ENCODE measurements at regions of chr15 and their contacts with region 1.

Region 1: DNA sequence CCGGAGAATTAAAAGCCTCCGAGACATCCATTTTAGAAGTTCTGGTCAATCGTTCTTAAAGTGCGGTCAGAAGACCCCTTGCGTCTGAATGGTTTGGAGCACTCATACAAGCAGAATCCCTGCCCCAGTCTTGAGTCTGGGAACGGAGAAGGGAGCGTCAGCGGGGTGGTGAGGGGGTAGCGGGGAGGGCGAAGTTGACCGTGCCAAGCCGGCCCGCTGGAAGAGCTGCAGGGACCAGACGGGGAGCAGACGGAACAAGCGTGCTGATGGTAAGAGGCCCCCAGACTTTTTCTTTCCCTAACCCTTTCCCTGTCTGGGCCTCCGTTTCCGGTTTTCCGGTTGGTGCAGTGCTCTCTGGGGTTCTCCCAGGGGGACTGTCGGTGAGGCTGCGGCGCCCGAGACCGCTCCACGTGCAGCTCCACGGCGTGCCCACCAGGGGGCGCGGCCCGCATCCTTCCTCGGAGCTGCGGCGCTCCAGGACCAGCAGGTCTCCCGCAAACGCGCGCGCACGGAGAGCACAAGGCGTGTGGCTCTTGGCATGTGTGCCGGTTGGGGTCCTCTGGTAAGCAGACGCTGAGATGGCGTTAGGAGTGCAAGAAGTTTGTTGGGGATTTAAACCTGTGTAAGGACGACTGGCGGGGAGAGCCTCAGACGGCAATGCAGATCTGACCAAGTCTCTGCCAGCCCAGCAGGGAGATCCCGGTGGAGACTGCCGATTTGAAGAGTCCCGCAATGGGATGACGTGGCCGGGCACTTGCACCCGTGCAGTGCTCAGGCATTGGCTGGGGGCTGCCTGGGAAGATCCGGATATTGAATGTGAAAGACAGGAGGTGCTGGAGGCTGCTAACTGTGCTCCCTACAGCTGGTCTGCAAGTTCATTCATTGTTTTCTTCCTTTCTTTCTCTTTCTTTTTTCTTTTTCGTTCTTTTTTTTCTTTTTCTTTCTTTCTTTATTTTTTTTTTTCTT is 19.2 kb upstream of the CORO2B start:
- DNase-seq: peak; percentile 96
- H3K4me3 ChIP-seq: peak overlapping the region in 7 of 8 donors; percentile 23 to 61 (median 33)
- H3K27ac ChIP-seq: peak overlapping the region in 1 of 8 donors; percentile 16
- H3K4me1 ChIP-seq: peaks cover 14 to 22% (median 18%) of the 10 kb centered on the region in 6 donors
- H3K27me3 ChIP-seq: peaks cover 0 to 55% (median 9%) of the 10 kb centered on the region in 7 donors
- CTCF ChIP-seq: peak; percentile 91 to 98 (median 96)
- POLR2A ChIP-seq: no peak

Region 2: DNA sequence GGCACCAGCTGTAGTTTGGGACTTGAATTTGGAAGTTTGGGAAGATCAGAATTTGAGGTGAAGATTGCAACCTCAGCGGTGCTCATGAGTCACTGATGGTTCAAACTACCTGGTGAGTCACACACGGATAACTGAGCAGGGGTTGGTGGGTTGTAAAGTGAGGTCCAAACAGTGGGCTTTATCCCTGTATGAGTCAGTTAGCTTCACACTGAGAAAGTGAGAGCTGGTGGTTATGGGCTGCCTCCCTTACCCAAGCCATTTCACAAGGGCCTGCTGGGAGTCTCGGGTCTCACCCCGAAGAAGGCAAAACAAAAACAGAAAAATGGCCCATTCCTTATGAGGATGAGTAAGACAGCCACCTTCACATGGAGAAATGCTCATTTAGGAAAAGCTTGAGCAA is 204.7 kb before region 1 on chr15:
- intact Hi-C with region 1: no loop called
- DNase-seq: no peak
- H3K4me3 ChIP-seq: no peak overlapping the region
- H3K27ac ChIP-seq: no peak overlapping the region
- H3K4me1 ChIP-seq: peaks cover 0 to 15% (median 8%) of the 10 kb centered on the region in 6 donors
- H3K27me3 ChIP-seq: no peaks in the 10 kb centered on the region
- CTCF ChIP-seq: no peak
- POLR2A ChIP-seq: no peak

Region 3: DNA sequence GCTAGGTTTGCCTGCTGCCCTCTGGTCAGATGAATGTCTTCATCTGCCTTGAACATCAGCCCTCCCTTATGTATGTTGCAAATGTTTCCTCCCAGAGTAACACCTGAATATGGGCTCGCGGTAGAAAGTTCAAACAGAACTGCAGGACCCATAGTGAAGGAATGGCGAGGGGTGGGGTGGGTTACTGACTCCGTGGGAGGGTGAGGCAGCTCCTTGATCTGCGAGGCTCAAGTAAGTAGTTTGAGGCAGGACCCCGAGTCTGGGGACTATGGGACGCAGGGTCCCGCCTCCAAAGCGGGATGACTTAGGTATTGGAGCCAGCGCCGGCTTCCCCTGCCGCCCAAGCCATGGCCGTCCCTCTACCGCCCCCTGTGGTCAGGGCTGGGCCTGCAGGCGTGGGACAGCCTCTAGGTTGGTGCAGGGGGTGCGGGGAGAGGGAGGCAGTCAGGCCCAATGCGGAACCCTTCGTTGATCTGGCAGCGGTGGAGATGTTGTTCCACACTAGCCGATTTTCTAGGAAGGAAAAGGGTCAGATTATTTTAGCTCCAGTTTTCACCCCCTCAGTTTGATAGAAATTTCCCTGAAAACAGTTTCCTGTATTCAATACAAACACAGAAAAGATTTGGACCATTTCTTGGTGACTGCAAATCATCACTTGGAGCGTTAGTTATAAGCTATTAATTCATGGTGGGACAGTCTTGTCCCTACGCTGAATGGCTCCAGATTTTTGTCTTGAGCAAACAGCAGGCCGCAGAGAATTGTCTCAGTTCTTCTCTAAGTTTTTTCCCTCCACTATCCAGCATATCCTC is 91.5 kb after region 1 on chr15:
- intact Hi-C with region 1: loop called (anchors 10 kb)
- DNase-seq: peak; percentile 88
- H3K4me3 ChIP-seq: no peak overlapping the region
- H3K27ac ChIP-seq: no peak overlapping the region
- H3K4me1 ChIP-seq: no peaks in the 10 kb centered on the region
- H3K27me3 ChIP-seq: peaks cover 0 to 7% (median 0%) of the 10 kb centered on the region in 7 donors
- CTCF ChIP-seq: peak in 10 of 11 experiments; percentile 36 to 79 (median 66)
- POLR2A ChIP-seq: no peak

Region 4: GRCh38 chr15:68672781-68673205 is 113.2 kb after region 1 on chr15:
- intact Hi-C with region 1: loop called (anchors 5 kb)
- DNase-seq: peak; percentile 42
- H3K4me3 ChIP-seq: no peak overlapping the region
- H3K27ac ChIP-seq: no peak overlapping the region
- H3K4me1 ChIP-seq: peaks cover 13 to 30% (median 22%) of the 10 kb centered on the region in 6 donors
- H3K27me3 ChIP-seq: peaks cover 0 to 23% (median 0%) of the 10 kb centered on the region in 7 donors
- CTCF ChIP-seq: no peak
- POLR2A ChIP-seq: no peak

Measured in spleen (tissue), 13 donors.